ENCODE measurements at regions of chr1 and their contacts with region 1.

Region 1: DNA sequence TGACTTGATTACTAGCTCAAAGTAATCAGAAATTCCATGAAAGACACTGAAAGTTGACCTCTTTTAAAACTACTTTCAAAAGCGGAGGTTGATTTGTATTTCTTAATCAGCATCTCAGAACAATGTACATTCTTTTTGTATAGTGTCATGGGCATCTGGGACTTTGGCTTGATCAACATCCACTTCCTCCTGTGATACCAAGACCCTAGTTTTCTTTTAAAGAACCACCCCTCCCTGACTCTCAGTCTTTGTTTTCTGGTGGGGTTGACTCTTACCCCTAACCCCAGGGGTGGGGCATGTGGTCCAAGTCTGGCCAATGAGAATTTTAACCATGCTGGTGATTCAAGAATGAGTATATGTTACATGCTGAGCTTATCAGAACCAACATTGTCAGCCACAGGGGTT is 21.7 kb upstream of the IRF2BP2 start:
- DNase-seq: no peak
- ATAC-seq: no peak
- H3K4me3 ChIP-seq: no peak overlapping the region
- H3K27ac ChIP-seq: no peak overlapping the region
- H3K4me1 ChIP-seq: no peaks in the 10 kb centered on the region
- H3K27me3 ChIP-seq: no peaks in the 10 kb centered on the region
- CTCF ChIP-seq: no peak
- EP300 ChIP-seq: no peak
- POLR2A ChIP-seq: no peak
- RAD21 ChIP-seq: no peak

Region 2: DNA sequence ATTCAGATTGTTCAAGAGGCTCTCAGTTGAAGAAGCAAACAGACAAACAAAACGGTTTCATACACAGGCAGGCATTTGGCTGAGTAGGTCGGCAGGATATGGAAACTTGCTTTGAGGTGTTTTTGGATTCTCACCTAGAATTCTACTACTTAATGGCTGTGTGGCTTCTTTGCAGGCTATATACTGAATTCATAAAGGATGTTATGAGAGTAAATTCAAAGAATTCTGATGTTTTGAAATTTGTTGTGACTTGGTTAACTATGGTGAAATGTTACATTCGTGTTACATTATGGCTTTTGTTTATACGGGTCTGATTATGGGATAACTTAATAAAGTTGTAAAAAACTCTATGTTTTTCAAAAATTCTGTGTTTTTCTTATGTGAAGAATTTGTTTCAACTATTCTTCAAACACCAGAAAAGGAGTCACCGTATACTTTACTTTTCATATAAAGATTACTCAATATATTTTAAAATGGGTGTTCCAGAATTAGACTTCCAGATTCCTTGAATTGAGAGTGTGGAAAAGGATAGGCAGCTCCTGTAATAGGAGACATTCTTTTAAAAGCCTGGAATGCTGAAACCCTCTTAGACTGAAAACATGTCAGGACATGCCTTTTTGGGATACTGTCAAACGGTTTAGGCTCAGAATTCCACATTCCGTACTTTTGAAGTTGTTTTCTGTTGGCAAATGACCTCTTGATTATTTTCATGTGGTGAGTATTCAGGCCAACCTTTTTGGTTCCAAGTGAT is 13.6 kb before region 1 on chr1:
- CTCF ChIA-PET with region 1: interaction called, 7 read pairs
- POLR2A ChIA-PET with region 1: interaction called, 3 read pairs
- RAD21 ChIA-PET with region 1: interaction called, 3 read pairs
- SMC1A ChIA-PET with region 1: interaction called, 23 read pairs
- in situ Hi-C with region 1: no loop called
- intact Hi-C with region 1: no loop called
- DNase-seq: no peak
- ATAC-seq: no peak
- H3K4me3 ChIP-seq: no peak overlapping the region
- H3K27ac ChIP-seq: no peak overlapping the region
- H3K4me1 ChIP-seq: peaks cover 7% of the 10 kb centered on the region
- H3K27me3 ChIP-seq: no peaks in the 10 kb centered on the region
- CTCF ChIP-seq: no peak
- EP300 ChIP-seq: no peak
- POLR2A ChIP-seq: no peak
- RAD21 ChIP-seq: no peak

Region 3: DNA sequence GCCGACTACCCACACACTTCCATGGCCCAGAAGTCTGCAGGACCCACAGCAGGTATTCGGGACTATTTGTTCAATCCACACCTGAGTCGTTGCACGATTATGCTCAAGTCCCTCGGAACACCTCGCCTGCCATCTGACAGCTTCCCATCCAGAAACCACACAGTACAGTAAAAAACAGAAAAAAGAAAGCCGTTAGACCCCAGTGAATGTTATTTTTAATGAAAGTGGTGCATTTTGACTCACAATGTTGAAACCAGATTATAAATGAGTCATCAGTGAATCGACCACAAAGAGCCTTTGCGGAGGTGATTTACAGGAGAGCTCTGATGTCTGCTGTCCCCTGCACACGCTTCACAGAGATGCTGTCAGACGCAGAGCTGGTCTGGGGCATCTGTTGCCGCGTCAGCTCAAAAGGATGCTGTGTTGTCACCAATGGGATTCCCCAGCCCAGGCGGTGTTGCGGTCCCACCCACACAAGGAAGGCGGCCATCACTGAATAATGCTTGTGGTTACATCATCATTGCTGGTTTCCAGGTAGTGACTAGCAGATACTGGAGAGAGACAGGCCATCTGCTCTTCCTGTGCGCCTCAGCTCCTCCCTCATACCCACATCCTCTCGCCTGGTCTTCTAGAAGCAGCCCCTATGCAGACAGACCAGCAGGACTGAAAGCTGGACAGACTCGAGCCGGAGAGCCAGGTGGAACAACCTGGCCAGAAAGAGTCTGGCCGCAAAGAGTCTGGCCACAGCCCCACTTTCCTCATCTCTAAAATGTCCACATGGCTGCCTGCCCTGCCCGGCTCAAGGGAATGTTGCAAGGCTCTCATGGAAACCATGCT is 380.1 kb after region 1 on chr1:
- CTCF ChIA-PET with region 1: no interaction called
- POLR2A ChIA-PET with region 1: no interaction called
- RAD21 ChIA-PET with region 1: no interaction called
- SMC1A ChIA-PET with region 1: no interaction called
- in situ Hi-C with region 1: no loop called
- intact Hi-C with region 1: no loop called
- DNase-seq: peak; percentile 100
- ATAC-seq: peak; percentile 75
- H3K4me3 ChIP-seq: peak overlapping the region; percentile 46; the same call in 1 of the 2 replicates
- H3K27ac ChIP-seq: peak overlapping the region; percentile 99
- H3K4me1 ChIP-seq: peaks cover 86% of the 10 kb centered on the region
- H3K27me3 ChIP-seq: no peaks in the 10 kb centered on the region
- CTCF ChIP-seq: no peak
- EP300 ChIP-seq: peak; percentile 100
- POLR2A ChIP-seq: peak; percentile 81
- RAD21 ChIP-seq: peak; percentile 30

Measured in GM12878 (cell line).